T-cell (primary cell): ENCODE measurements at regions of chr1 and their contacts with region 1.

Region 1: DNA sequence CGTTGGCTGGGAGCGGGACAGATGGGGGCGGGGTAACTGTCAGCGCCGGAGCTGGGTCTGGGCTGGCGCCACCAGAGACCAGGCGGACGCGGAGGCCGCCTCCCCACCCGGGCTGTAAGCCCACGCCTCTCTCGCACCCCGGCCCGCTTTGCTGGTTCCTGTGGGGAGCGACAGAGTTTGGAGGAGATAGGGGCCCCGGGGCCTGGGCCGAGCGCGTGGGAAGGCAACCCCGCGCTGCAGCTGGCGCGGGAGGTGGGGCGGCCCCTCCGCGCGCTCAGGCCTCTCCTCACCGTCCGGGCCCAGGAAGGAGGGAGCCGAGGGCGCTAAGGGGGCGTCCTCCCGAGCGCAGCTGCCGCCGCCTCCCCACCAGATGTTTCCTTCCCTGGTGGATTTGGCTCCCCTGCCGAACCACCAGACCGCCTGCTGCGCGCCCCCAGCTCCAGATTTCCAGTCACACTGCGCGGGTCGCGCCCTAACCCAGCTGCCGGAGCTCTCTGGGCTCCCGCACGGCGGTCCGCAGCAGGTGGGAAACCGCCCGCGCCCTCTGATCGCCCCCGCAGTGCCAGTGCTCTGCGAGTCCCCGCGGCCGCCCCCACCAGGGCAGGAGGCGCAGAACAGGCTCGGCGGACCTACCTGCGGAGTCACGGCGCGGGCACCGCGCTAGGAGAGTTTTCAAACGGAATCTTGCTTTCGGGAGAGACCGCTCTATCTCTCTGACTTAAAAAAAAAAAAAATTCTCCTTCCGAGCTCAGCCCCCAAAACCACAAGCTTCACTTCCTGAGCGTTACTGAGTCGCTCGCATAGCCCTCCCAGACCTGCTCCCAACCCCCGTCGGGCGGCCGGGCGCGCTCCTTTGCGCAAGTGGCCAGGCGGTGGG is 1.1 kb downstream of the GFI1 start:
- DNase-seq: peak; percentile 53 to 86 (median 71)
- ATAC-seq: peak; percentile 66 to 74 (median 68)
- H3K4me3 ChIP-seq: peak overlapping the region; percentile 77 to 95
- H3K4me3 Mint-ChIP-seq: peak overlapping the region; percentile 89 to 98 (median 95)
- H3K27ac ChIP-seq: peak overlapping the region; percentile 73
- H3K27ac Mint-ChIP-seq: peak overlapping the region; percentile 89 to 95
- H3K4me1 ChIP-seq: peaks cover 11 to 45% of the 10 kb centered on the region in 2 experiments
- H3K4me1 Mint-ChIP-seq: peaks cover 37 to 43% (median 42%) of the 10 kb centered on the region in 3 donors
- H3K27me3 ChIP-seq: peaks cover 0 to 5% of the 10 kb centered on the region in 2 experiments
- H3K27me3 Mint-ChIP-seq: peaks cover 0 to 5% of the 10 kb centered on the region in 2 donors

Region 2: GRCh38 chr1:92376345-92376744 is 109.3 kb before region 1 on chr1:
- CTCF ChIA-PET with region 1: interaction called in 1 of 2 experiments, 10 read pairs
- POLR2A ChIA-PET with region 1: no interaction called
- DNase-seq: no peak
- ATAC-seq: no peak
- H3K4me3 ChIP-seq: no peak overlapping the region
- H3K4me3 Mint-ChIP-seq: no peak overlapping the region
- H3K27ac ChIP-seq: no peak overlapping the region
- H3K27ac Mint-ChIP-seq: no peak overlapping the region
- H3K4me1 ChIP-seq: no peaks in the 10 kb centered on the region
- H3K4me1 Mint-ChIP-seq: peaks cover 0 to 6% (median 3%) of the 10 kb centered on the region in 3 donors
- H3K27me3 ChIP-seq: no peaks in the 10 kb centered on the region
- H3K27me3 Mint-ChIP-seq: no peaks in the 10 kb centered on the region

Region 3: GRCh38 chr1:92424381-92424780 is 61.2 kb before region 1 on chr1:
- CTCF ChIA-PET with region 1: no interaction called
- POLR2A ChIA-PET with region 1: no interaction called
- DNase-seq: no peak
- ATAC-seq: no peak
- H3K4me3 ChIP-seq: no peak overlapping the region
- H3K4me3 Mint-ChIP-seq: no peak overlapping the region
- H3K27ac ChIP-seq: no peak overlapping the region
- H3K27ac Mint-ChIP-seq: no peak overlapping the region
- H3K4me1 ChIP-seq: no peaks in the 10 kb centered on the region
- H3K4me1 Mint-ChIP-seq: no peaks in the 10 kb centered on the region
- H3K27me3 ChIP-seq: no peaks in the 10 kb centered on the region
- H3K27me3 Mint-ChIP-seq: no peaks in the 10 kb centered on the region

Region 4: GRCh38 chr1:92473781-92474495 is 11.7 kb before region 1 on chr1:
- CTCF ChIA-PET with region 1: interaction called, 4 to 14 read pairs
- POLR2A ChIA-PET with region 1: interaction called, 6 to 7 read pairs
- DNase-seq: peak in 1 of 35 experiments; percentile 45
- ATAC-seq: peak in 1 of 4 experiments; percentile 35
- H3K4me3 ChIP-seq: no peak overlapping the region
- H3K4me3 Mint-ChIP-seq: peak overlapping the region; percentile 14 to 57 (median 25)
- H3K27ac ChIP-seq: peak overlapping the region; percentile 80
- H3K27ac Mint-ChIP-seq: peak overlapping the region; percentile 82 to 92
- H3K4me1 ChIP-seq: peaks cover 19 to 42% of the 10 kb centered on the region in 2 experiments
- H3K4me1 Mint-ChIP-seq: peaks cover 53 to 61% (median 59%) of the 10 kb centered on the region in 3 donors
- H3K27me3 ChIP-seq: no peaks in the 10 kb centered on the region
- H3K27me3 Mint-ChIP-seq: no peaks in the 10 kb centered on the region

Region 5: GRCh38 chr1:93471911-93472310 is 986.3 kb after region 1 on chr1:
- CTCF ChIA-PET with region 1: no interaction called
- POLR2A ChIA-PET with region 1: interaction called in 1 of 2 experiments, 10 read pairs
- DNase-seq: no peak
- ATAC-seq: no peak
- H3K4me3 ChIP-seq: no peak overlapping the region
- H3K4me3 Mint-ChIP-seq: no peak overlapping the region
- H3K27ac ChIP-seq: no peak overlapping the region
- H3K27ac Mint-ChIP-seq: no peak overlapping the region
- H3K4me1 ChIP-seq: no peaks in the 10 kb centered on the region
- H3K4me1 Mint-ChIP-seq: no peaks in the 10 kb centered on the region
- H3K27me3 ChIP-seq: peaks cover 0 to 3% of the 10 kb centered on the region in 2 experiments
- H3K27me3 Mint-ChIP-seq: peaks cover 4 to 15% of the 10 kb centered on the region in 2 donors